Right cardiac atrium (tissue), 5 donors: ENCODE measurements at regions of chr12 and their contacts with region 1.

Region 1: GRCh38 chr12:132003846-132004245 is 54.1 kb downstream of the EP400 start:
- DNase-seq: no peak
- ATAC-seq: no peak
- H3K4me3 ChIP-seq: no peak overlapping the region
- H3K27ac ChIP-seq: no peak overlapping the region
- H3K4me1 ChIP-seq: no peaks in the 10 kb centered on the region
- H3K27me3 ChIP-seq: no peaks in the 10 kb centered on the region

Region 2: GRCh38 chr12:131104463-131105350 is 899.1 kb before region 1 on chr12:
- intact Hi-C with region 1: loop called in 1 of 4 experiments (anchors 10 kb)
- DNase-seq: peak; percentile 85 to 95 (median 95)
- ATAC-seq: peak; percentile 83 to 88
- H3K4me3 ChIP-seq: no peak overlapping the region
- H3K27ac ChIP-seq: no peak overlapping the region
- H3K4me1 ChIP-seq: no peaks in the 10 kb centered on the region
- H3K27me3 ChIP-seq: no peaks in the 10 kb centered on the region

Region 3: DNA sequence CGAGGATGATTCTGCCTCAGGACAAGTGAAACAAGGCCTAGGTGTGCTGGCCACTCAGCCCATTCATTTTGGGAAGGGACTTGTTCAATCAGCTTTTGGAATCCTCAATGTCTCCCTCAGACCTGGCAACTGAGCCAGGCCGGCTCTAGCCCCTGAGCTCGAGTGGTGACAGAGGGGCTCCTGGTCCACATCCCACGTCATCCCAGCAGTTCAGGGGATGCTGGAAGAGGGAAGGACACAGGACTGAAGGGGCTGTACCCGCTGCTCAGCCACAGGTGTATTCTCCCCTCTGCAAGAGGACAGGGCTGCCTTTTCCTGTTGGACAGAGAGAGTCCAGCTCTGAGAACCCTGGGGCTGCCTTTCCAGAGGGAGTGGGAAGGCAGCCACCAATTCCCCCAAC is 537.5 kb before region 1 on chr12:
- intact Hi-C with region 1: no loop called
- DNase-seq: no peak
- ATAC-seq: no peak
- H3K4me3 ChIP-seq: no peak overlapping the region
- H3K27ac ChIP-seq: no peak overlapping the region
- H3K4me1 ChIP-seq: no peaks in the 10 kb centered on the region
- H3K27me3 ChIP-seq: no peaks in the 10 kb centered on the region

Region 4: DNA sequence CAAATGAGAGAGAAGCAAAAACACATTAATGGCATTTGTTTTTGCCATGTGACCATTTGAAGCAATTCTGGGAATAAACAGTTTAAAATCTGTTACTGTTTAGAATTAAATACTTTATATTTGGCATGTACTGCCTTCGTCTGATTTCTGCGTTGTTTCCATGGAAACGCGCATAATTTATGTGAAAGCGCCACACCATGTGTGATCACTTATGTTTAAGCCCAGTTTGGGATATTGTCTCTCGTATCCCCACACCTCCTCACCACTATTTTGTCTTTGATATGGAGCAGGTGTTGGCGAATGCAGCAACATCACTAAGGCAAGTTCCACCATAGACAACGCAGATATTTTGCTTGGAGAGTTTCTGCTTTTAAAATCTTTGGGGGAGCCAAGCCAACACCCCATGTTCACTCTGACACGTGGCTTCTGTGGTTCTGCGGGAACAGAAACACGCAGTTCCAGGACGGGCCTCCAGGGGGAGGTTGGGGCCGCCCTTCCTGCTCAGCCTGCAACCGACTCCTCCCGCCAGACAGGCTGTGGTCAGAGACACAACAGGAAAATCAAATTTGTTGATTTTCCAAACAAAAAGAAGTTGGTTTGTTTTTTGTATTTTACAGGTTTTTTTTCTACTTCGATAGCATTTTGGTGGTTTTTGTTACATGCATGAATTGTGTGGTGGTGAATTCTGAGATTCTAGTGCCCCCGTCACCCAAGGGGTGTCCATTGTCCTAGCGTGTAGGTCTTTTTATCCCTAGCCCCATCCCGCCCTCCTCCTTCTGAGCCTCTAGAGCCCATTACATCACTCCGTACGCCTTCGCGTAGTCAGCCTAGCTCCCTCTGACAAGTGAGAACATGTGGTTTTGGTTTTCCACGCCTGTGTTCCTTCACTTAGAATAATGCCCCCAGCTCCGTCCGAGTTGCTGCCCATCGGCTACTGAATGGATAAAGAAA is 394.8 kb before region 1 on chr12:
- intact Hi-C with region 1: loop called in 1 of 4 experiments (anchors 5 kb)
- DNase-seq: peak; percentile 75 to 88 (median 88)
- ATAC-seq: peak; percentile 87 to 88
- H3K4me3 ChIP-seq: no peak overlapping the region
- H3K27ac ChIP-seq: no peak overlapping the region
- H3K4me1 ChIP-seq: no peaks in the 10 kb centered on the region
- H3K27me3 ChIP-seq: no peaks in the 10 kb centered on the region

Region 5: DNA sequence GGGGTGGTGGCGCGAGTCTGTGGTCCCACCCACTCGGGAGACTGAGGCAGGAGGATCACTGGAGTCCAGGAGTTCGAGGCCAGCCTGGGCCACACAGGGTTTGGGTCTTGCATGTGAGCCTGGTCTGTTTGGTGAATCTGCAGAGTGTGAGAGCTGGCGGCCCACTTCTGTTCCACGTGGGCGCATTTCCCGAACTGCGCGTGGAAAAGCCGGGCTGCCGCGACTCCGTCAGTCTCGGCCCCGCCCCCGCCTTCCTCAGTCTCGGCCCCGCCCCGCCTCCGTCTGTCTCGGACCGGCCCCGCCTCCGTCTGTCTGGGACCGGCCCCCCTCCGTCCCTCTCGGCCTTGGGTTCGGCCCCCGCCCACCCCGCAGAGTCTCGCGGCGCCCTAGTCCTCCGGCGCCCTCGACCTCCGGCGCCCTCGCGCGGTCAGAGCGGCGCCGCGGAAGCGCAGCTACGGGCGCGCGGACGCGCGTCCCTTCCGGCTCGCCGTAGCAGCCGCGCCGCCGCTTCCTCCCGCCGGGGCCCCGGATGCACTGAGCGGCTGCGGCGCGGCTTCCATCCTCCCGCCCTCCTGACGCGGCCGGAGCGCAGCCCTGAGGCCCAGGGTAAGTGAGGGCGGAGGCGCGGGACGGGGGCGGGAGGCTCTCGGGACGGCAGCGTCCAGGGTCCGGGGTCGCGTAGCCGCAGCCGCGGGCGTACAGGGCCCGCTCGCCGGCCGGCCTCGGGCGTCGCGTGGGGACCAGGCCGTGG is 54.2 kb before region 1 on chr12 and contains the start of gene EP400:
- intact Hi-C with region 1: no loop called
- DNase-seq: peak; percentile 97 to 99 (median 99)
- ATAC-seq: peak; percentile 98 to 99
- H3K4me3 ChIP-seq: peak within 1 kb of the TSS; percentile 95
- H3K27ac ChIP-seq: peak within 1 kb of the TSS; percentile 72
- H3K4me1 ChIP-seq: peaks cover 4% of the 10 kb centered on the region
- H3K27me3 ChIP-seq: no peaks in the 10 kb centered on the region
- total RNA-seq, gene EP400: 15.5 to 21.6 (median 18.1) TPM